Dendritic cell treated with granulocyte-macrophage colony-stimulating factor and Interleukin-4, amounts not matched to agents 40 ng/mL and 50 ng/mL, for 4 days (primary cell): ENCODE measurements at regions of chr9 and their contacts with region 1.

Region 1: DNA sequence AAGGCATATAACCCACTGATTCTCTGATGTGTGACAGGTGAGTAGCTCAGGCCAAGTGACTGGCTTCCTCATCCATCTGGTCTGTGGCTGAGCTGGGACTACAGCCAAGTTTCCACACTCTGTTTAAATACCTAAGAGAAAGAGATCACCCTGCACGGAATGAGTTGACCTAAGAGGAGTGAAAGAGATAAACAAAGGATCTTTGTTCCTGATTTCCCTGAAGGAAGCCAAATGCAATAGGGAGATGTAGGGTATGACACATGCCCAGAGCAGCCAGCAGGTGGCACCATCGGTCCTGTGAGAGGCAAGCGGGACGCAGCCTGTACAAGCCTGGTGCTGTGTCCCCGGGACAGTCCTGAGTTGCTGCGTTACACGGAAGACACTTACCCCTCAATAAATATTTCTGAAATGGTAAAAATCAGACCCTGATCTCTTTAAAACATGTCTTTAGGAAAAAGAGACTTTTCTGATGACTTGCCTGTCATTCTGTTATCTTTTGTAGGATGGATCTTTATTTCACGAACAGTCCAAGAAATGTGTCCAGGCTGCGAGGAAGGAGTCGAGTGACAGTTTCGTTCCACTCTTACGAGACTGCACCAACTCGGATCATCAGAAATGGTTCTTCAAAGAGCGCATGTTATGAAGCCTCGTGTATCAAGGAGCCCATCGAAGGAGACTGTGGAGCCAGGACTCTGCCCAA is 41.1 kb downstream of the GALNT12 start:
- H3K4me3 Mint-ChIP-seq: no peak overlapping the region
- H3K27ac Mint-ChIP-seq: no peak overlapping the region
- H3K4me1 Mint-ChIP-seq: peaks cover 26% of the 10 kb centered on the region
- H3K27me3 Mint-ChIP-seq: peaks cover 2% of the 10 kb centered on the region

Region 2: DNA sequence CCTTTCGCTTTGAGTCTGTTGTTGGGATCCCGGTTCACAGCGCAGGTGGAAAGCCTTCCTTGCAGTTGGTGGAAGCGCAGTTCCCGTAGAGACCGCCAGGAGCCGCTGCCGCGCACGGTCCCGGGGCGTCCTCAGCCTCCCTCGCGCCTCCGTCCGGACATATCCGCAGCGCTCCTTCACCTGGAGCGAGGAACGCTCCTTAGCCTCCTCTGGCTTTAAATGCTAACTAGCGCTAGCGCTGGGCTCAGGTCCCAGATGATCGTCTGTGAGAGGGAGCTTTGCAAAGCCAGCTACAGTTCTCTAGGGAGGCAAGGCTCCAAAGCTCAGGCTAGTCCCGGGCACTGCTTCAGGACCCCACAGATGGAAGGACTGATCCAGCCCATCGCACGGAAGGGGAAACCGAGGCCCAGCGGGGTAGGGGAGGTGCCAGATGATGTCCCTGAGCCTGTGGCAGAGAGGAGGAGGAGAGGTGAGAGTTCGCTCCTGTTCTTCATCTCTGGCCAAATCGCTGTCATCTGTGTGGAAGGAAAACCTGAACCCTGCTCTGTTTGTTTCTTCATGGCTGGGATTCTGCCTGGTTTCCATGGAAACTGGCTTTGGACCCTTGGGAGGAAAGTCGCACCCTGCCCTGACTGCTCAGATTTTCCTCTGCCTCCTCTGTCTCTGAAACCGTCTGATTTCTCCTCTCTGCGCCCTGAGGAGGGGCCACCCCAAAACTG is 126.6 kb after region 1 on chr9:
- intact Hi-C with region 1: loop called (anchors 5 kb)
- H3K4me3 Mint-ChIP-seq: no peak overlapping the region
- H3K27ac Mint-ChIP-seq: no peak overlapping the region
- H3K4me1 Mint-ChIP-seq: no peaks in the 10 kb centered on the region
- H3K27me3 Mint-ChIP-seq: peaks cover 53% of the 10 kb centered on the region

Region 3: DNA sequence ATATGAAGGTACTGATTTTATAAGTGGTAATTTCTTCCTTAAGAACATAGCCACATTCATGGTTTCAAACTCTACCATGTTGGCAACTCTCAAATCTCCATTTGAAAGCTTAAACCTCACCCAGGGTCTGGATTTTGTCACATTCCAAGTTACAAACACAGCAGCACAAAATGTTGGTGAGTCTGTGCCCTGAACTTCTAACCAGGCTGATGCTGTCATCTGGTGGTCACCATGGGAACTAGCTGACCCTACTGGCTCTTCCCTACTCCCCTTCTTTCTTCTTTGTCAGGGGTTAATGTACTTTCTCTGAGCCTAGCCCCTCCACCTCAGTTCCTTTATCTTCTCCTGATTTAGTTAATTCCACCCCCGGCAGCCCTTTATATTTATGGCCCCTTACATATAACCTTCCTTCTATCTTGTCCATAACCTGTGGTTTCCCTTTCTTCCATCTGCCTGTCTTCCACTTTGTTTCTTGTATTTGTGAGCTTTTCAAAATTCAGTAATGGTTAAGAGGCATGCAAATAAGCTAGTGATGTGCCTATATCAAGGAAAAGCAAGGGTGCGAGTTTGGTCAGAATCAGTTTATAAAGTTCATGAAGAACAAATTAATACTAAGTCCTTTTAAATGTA is 292.2 kb after region 1 on chr9:
- intact Hi-C with region 1: loop called (anchors 5 kb)
- H3K4me3 Mint-ChIP-seq: no peak overlapping the region
- H3K27ac Mint-ChIP-seq: peak overlapping the region; percentile 34
- H3K4me1 Mint-ChIP-seq: peaks cover 50% of the 10 kb centered on the region
- H3K27me3 Mint-ChIP-seq: no peaks in the 10 kb centered on the region

Region 4: GRCh38 chr9:99211741-99212140 is 363.1 kb after region 1 on chr9:
- intact Hi-C with region 1: no loop called
- H3K4me3 Mint-ChIP-seq: no peak overlapping the region
- H3K27ac Mint-ChIP-seq: no peak overlapping the region
- H3K4me1 Mint-ChIP-seq: peaks cover 37% of the 10 kb centered on the region
- H3K27me3 Mint-ChIP-seq: peaks cover 1% of the 10 kb centered on the region